Right ventricle myocardium superior (tissue), 1 donor: ENCODE measurements at regions of chr2 and their contacts with region 1.

Region 1: DNA sequence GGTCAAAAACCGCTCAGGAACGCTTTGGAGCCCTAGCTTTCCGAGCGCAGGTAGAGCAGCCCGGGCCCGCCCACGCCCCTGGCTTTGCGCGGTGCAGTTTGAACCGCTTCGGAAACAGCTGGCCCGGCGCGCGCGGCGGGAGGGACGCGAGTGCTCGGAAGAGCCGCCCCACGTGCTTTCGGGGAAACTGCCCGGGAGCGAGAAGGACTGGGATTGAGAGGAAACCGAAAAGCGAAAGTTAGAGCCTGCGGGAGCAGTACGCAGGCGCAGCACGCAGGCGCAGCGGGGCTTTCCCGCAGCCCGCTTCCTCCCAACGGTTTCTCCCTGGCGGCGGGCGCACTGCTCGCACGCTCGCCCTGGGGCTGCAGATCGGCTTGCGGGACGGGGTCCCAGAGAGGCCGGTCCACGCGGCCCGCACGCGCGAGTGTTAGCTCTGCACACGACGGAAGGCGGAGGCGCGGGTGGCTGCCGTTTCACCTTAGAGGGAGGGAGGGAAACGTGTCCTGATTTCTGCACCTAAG is 6.3 kb upstream of the STAT1 start:
- DNase-seq: peak; percentile 95
- ATAC-seq: peak; percentile 100

Region 2: GRCh38 chr2:190763901-190764514 is 256.3 kb before region 1 on chr2:
- intact Hi-C with region 1: no loop called
- DNase-seq: no peak
- ATAC-seq: no peak

Region 3: DNA sequence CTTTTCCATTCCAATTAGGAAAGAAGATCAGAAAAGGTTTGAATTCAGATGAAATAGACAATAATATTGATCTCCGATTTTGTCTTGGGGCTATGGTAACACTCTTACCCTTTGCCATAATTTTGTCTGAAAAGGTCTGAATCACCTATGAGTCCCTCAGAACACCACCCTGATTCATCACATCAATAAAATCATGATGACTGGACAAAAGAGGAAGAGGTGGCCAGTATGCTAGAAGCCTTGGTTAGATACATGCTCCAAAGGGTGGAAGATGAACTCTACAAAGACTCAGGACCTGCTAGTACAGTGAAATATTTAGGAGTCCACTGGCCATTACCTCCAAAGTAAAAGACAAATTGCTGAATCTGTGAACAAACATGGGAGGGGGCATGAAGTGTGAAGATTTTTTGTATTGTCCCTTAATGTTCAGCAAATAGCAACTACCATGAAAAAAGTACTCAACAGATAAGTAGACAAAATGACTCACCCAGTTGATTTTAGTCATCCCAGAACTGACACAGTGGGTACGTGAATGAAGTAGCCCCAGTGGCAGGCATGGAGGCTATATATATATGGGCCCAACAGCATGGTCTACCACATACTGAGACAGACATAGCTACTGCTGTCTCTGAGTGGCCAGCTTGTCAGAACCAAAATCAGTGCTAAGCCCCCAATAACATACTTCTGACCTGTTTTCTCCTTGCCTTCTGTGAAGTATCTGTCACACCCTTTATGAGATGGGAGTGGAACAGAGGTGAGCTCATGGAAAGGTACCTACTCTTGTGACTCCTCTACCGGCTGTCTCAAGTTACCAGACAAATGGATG is 176.2 kb before region 1 on chr2:
- intact Hi-C with region 1: loop called (anchors 10 kb)
- DNase-seq: no peak
- ATAC-seq: no peak